Activated T-helper 1 cell treated with anti-CD3 and anti-CD28 coated beads, Interleukin-12 subunit alpha, Interleukin-12 subunit beta, Interleukin-2, Interleukin-4 antibody, amounts not matched to agents 30 ng/mL and 10 ng/mL and 1 ng/mL, durations not matched to agents 14 hours and 24 hours and 36 hours (primary cell): ENCODE measurements at regions of chr12 and their contacts with region 1.

Region 1: DNA sequence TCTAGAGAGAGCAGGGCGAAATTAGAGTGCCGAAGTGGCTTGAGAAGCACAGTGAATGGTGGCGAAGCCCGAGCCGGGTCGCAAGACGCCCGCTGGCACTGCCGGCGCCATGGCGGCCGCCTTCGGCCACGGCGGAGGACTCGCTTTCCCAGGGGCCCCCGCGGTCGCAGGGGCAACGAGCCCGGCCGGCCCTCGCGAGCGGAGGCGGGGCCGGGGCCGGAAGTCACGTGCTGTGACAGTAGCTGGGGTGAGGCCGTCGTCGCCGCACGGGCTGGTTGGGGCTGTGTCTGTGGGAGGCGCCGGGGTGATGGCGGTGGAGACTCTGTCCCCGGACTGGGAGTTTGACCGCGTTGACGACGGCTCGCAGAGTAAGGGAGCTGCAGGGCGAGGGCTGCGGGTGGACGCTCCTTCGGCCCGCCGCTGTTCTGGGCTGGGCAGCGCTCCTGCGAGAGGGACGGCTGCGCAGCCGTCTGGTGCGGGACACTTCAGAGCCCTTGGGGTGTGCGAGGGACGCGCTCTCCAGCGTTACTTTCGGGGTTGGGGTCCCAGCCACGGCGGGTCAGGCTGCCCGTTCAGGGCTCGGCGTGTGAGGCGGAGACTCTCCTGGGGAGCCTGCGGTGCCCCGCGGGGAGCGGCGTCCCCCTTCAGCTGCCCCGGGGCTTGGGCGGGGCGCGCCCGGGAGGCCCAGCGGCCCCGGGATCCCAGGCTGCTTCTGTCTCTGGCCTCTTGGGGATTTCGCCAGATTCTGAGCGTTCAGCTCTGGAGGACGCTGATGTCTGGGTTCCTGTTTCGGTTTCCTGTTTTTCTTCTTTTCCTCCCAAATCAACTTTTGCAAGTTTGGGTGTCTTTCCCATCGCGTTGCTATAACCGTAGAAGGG is at the start of gene WASHC4:
- DNase-seq: peak; percentile 96
- H3K4me3 Mint-ChIP-seq: peak within 1 kb of the TSS; percentile 95
- H3K27ac Mint-ChIP-seq: peak within 1 kb of the TSS; percentile 94
- H3K4me1 Mint-ChIP-seq: peaks cover 44% of the 10 kb centered on the region
- H3K27me3 Mint-ChIP-seq: peaks cover 24% of the 10 kb centered on the region
- total RNA-seq, gene WASHC4: 34.5 and 36.3 TPM in 2 replicates

Region 2: GRCh38 chr12:103956516-103957027 is 1151.2 kb before region 1 on chr12:
- intact Hi-C with region 1: loop called (anchors 2 kb)
- DNase-seq: peak; percentile 3
- H3K4me3 Mint-ChIP-seq: peak overlapping the region; percentile 100
- H3K27ac Mint-ChIP-seq: peak overlapping the region; percentile 100
- H3K4me1 Mint-ChIP-seq: peaks cover 61% of the 10 kb centered on the region
- H3K27me3 Mint-ChIP-seq: no peaks in the 10 kb centered on the region

Region 3: GRCh38 chr12:104303538-104304151 is 804.1 kb before region 1 on chr12 and contains the start of gene EID3:
- intact Hi-C with region 1: loop called (anchors 1 kb)
- DNase-seq: peak; percentile 92
- H3K4me3 Mint-ChIP-seq: peak within 1 kb of the TSS; percentile 93
- H3K27ac Mint-ChIP-seq: peak within 1 kb of the TSS; percentile 99
- H3K4me1 Mint-ChIP-seq: peaks cover 66% of the 10 kb centered on the region
- H3K27me3 Mint-ChIP-seq: no peaks in the 10 kb centered on the region
- total RNA-seq, gene EID3: 10.5 and 10.6 TPM in 2 replicates

Region 4: DNA sequence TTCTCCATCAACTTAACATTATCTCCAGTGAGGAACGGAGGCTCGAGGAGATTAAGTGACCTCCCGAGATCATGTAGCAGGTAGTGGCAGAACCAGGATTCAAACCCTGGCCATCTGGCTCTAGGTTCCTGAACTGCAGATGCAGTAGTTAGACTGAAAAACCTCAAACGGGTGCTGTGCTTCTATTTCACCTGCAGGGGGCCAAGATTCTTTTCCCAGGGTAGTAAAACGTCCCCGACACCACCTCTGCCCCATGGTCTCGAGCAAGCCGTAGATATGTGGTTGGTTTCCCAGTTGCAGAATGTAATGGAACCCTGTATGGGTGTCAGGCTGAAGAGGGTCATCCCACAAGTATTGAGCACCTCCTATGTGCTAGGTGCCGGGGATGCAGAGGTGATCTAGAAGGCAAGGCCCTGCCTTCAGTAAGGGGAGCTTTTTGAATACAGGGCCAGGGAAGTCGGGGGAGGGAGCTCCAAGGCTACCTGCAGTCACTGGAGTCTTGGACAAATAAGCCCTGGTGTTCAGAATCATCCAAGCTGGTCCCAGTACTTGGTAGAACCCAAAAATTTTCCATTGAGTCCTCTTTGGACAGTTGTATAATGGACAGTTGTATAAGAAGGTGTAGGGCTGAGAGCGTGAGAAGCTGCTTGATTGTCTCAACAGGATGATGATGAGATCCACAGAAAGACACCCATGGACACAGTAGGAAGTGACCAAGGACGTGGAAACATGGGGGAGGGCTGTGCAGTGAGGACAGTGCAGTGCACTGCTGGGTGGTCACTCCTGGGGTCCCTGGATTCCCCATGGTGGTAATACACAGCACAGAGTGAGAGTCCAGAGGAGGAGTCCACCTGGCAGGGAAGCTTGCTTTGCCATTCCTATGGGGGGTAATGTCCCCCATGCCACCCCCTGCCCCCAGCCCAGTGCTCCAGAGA is 453.7 kb before region 1 on chr12:
- intact Hi-C with region 1: no loop called
- DNase-seq: no peak
- H3K4me3 Mint-ChIP-seq: no peak overlapping the region
- H3K27ac Mint-ChIP-seq: peak overlapping the region; percentile 31
- H3K4me1 Mint-ChIP-seq: peaks cover 78% of the 10 kb centered on the region
- H3K27me3 Mint-ChIP-seq: no peaks in the 10 kb centered on the region

Region 5: GRCh38 chr12:104930388-104931326 is 177.1 kb before region 1 on chr12:
- intact Hi-C with region 1: loop called (anchors 1 kb)
- DNase-seq: peak; percentile 47
- H3K4me3 Mint-ChIP-seq: peak overlapping the region; percentile 11
- H3K27ac Mint-ChIP-seq: peak overlapping the region; percentile 87
- H3K4me1 Mint-ChIP-seq: peaks cover 38% of the 10 kb centered on the region
- H3K27me3 Mint-ChIP-seq: peaks cover 2% of the 10 kb centered on the region

Region 6: GRCh38 chr12:105235732-105236476 is 128.2 kb after region 1 on chr12 and contains the start of gene APPL2:
- intact Hi-C with region 1: loop called (anchors 2 kb)
- DNase-seq: peak; percentile 71
- H3K4me3 Mint-ChIP-seq: peak within 1 kb of the TSS; percentile 91
- H3K27ac Mint-ChIP-seq: peak within 1 kb of the TSS; percentile 77
- H3K4me1 Mint-ChIP-seq: peaks cover 32% of the 10 kb centered on the region
- H3K27me3 Mint-ChIP-seq: peaks cover 3% of the 10 kb centered on the region
- total RNA-seq, gene APPL2: 22.9 and 27.8 TPM in 2 replicates

Region 7: DNA sequence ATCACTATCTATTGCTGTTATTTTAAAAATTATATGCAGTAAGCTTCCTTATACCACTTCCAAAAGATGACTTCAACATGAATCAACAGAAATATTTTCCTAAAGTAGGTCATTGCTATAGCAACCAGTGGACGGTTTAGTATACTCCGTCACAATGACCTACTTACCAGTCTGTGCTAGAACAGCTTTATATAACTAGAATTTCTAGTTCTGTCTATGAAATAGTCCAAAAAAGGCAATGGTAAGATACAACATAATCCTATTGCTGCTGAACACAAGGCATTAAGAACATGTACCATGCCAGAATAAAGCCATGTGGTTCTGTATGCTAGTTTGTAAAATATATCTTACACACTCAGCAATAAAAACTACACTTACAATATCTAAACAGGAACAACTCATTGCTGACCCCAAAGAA is 1919.9 kb after region 1 on chr12:
- intact Hi-C with region 1: no loop called
- DNase-seq: no peak
- H3K4me3 Mint-ChIP-seq: no peak overlapping the region
- H3K27ac Mint-ChIP-seq: peak overlapping the region; percentile 12
- H3K4me1 Mint-ChIP-seq: peaks cover 10% of the 10 kb centered on the region
- H3K27me3 Mint-ChIP-seq: no peaks in the 10 kb centered on the region